BJ (cell line): ENCODE measurements at regions of chr2 and their contacts with region 1.

Region 1: GRCh38 chr2:9142551-9143263 is 63.9 kb upstream of the ASAP2 start:
- DNase-seq: peak; percentile 46
- H3K4me3 ChIP-seq: no peak overlapping the region
- H3K27me3 ChIP-seq: no peaks in the 10 kb centered on the region
- CTCF ChIP-seq: peak; percentile 99

Region 2: GRCh38 chr2:8872821-8873432 is 269.8 kb before region 1 on chr2:
- CTCF ChIA-PET with region 1: interaction called, 65 read pairs
- POLR2A ChIA-PET with region 1: no interaction called
- DNase-seq: peak; percentile 11
- H3K4me3 ChIP-seq: no peak overlapping the region
- H3K27me3 ChIP-seq: no peaks in the 10 kb centered on the region
- CTCF ChIP-seq: peak; percentile 63

Region 3: GRCh38 chr2:9112079-9112721 is 30.5 kb before region 1 on chr2:
- CTCF ChIA-PET with region 1: interaction called, 11 read pairs
- POLR2A ChIA-PET with region 1: no interaction called
- DNase-seq: peak; percentile 63
- H3K4me3 ChIP-seq: no peak overlapping the region
- H3K27me3 ChIP-seq: no peaks in the 10 kb centered on the region
- CTCF ChIP-seq: no peak

Region 4: DNA sequence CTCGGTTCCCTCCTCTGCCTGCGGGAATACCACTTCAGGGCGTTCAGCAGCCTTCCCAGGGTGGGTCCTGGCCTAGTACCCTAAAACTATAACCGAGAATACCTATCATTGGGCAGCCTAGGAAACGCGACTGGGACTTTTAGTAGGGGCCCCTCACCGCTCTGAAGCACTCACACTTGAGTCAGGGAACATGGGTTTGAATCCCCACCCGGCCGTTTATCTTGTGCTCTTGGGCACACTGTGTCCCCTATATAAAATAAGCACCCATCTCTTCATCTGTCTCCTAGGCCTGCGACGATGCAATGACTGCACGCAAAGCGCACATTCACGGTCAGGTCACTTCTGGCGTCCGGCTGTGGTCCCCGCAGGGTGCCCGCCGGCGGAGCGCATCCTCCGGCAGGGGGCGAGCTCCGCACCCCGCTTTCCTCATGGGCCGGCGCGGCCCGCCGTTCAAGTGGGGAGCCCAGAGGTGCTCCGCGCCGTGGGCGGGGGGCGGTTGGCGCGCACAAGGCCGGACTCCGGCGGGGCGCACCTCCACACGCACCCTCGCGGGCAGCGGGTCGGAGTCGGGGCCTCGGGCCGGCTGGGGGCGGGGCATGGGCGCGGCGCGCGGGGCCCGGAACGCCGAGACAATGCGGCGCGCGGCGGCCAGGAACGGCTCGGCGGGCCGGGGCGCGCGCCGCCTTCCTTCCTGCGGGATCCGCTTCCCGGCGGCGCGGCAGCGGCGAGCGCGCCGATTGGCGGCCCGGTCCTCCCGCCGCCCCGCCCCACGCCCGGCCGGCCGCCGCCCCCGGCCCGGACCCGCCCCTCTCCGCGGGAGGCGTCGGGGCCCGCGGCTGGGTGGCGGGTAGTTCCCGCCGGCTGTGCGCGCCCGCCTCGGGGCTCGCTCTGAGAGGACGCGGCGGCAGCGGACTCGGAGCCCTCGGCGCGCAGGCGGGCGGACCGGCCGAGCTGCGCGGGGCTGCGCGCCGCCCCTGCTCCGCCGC is 63.5 kb after region 1 on chr2 and contains the start of gene ASAP2:
- CTCF ChIA-PET with region 1: interaction called, 13 read pairs
- POLR2A ChIA-PET with region 1: no interaction called
- DNase-seq: no peak
- H3K4me3 ChIP-seq: peak within 1 kb of the TSS; percentile 85
- H3K27me3 ChIP-seq: no peaks in the 10 kb centered on the region
- CTCF ChIP-seq: peak; percentile 76
- polyA plus RNA-seq, gene ASAP2: 14.1 and 18.2 TPM in 2 replicates

Region 5: DNA sequence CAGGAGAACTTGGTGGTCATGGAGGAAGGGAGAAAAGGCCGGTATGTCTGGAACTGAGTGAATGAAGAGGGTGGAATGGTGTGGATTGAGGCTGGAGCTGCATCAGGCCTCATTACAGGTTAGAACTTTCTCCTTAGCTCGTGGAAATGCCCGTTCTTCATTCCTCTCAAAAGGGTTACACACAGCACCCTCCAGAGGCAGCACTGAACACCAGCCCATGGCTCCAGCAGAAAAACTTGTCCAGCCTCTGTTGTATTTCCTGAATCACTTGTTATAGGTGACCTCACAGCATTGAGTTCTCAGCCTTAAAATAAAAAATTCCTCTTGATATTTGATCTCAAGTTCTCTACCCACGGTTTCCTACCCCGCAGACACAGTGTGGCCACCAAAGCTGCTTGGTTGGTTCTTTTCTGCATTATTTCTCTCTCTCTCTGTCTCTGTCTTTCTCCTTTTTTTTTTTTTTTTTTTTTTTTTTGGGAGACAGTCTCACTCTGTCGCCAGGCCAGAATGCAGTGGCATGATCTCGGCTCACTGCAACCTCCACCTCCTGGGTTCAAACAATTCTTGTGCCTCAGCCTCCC is 191.0 kb after region 1 on chr2:
- CTCF ChIA-PET with region 1: interaction called, 15 read pairs
- POLR2A ChIA-PET with region 1: no interaction called
- DNase-seq: peak; percentile 28
- H3K4me3 ChIP-seq: no peak overlapping the region
- H3K27me3 ChIP-seq: no peaks in the 10 kb centered on the region
- CTCF ChIP-seq: peak; percentile 80

Region 6: DNA sequence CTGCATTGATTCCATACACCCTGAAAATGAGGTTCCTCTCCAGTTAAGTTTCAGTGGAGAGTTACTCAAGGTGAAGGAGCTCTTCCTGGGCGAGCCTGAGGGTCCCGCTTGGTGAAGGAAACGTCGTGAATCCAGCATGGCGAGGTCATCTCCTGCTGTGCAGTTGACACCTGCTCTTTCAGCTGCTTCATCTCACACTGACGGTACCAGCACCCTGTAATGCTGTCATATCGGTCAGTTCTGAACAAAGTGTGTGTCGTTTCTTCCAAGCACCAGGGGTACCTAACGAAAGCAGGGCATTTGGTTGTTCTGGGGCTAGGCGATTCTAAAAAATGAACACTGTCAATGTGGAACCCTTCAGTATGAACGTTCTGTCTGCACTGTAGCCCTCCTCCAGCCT is 228.0 kb after region 1 on chr2:
- CTCF ChIA-PET with region 1: interaction called, 51 read pairs
- POLR2A ChIA-PET with region 1: interaction called, 7 read pairs
- DNase-seq: no peak
- H3K4me3 ChIP-seq: no peak overlapping the region
- H3K27me3 ChIP-seq: no peaks in the 10 kb centered on the region
- CTCF ChIP-seq: no peak

Region 7: GRCh38 chr2:9378433-9379390 is 236.0 kb after region 1 on chr2:
- CTCF ChIA-PET with region 1: interaction called, 11 read pairs
- POLR2A ChIA-PET with region 1: no interaction called
- DNase-seq: no peak
- H3K4me3 ChIP-seq: no peak overlapping the region
- H3K27me3 ChIP-seq: no peaks in the 10 kb centered on the region
- CTCF ChIP-seq: no peak